ENCODE measurements at regions of chr10 and their contacts with region 1.

Region 1: DNA sequence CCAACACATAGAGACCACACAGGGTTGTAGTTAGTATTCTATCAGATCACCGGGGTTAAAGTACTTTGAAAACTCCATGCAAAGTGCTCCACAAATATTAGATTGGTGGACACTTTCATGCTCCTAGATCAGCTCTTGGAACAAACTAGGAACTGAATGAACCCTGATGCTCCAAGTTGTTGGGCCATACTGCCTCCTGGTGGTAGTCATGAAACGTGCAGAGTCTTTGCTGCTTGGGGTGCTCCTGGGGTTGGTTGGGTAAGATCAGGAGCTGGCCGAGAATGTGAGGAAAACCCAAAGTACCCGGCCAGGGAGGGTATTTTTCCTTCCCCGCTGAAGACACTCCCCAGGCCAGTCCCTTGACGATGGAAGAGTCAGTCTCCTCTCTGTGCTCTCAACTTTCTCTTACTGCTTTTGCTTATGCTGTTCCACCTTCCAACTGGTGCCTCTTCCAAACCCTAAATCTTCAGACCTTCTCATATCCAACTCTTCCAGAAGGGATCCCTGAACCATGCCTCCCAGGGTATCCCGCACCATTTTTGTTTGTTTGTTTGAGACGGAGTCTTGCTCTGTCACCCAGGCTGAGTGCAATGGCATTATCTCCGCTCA is 920 bp upstream of the RPEL1 start:
- DNase-seq: peak; percentile 88
- H3K4me3 Mint-ChIP-seq: no peak overlapping the region
- H3K27ac Mint-ChIP-seq: no peak overlapping the region
- H3K4me1 Mint-ChIP-seq: peaks cover 22% of the 10 kb centered on the region
- H3K27me3 Mint-ChIP-seq: no peaks in the 10 kb centered on the region
- CTCF ChIP-seq: peak; percentile 72

Region 2: GRCh38 chr10:102917962-102918816 is 326.6 kb before region 1 on chr10 and contains the start of gene CNNM2:
- CTCF ChIA-PET with region 1: interaction called, 6 read pairs
- POLR2A ChIA-PET with region 1: interaction called, 8 read pairs
- intact Hi-C with region 1: loop called (anchors 1 kb)
- DNase-seq: peak; percentile 100
- H3K4me3 Mint-ChIP-seq: peak within 1 kb of the TSS; percentile 89
- H3K27ac Mint-ChIP-seq: peak within 1 kb of the TSS; percentile 49
- H3K4me1 Mint-ChIP-seq: peaks cover 24% of the 10 kb centered on the region
- H3K27me3 Mint-ChIP-seq: no peaks in the 10 kb centered on the region
- CTCF ChIP-seq: no peak
- total RNA-seq, gene CNNM2: 5.6 and 7.4 TPM in 2 replicates

Region 3: DNA sequence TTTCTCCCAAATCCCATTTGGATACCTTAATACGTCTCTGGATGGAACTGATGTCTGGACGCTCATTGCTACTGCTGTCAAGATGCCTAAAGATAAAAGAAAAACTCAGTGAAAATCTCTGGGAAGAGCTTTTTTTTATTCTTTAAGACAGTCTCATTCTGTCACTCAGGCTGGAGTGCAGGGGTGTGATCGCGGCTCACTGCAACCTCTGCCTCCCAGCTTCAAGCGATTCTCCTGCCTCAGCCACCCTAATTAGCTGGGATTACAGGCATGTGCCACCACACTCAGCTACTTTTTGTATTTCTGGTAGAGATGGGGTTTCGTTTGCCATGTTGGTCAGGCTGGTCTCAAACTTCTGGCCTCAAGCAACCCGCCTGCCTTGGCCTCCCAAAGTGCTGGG is 153.9 kb before region 1 on chr10:
- CTCF ChIA-PET with region 1: interaction called, 4 read pairs
- POLR2A ChIA-PET with region 1: no interaction called
- intact Hi-C with region 1: loop called (anchors 5 kb)
- DNase-seq: no peak
- H3K4me3 Mint-ChIP-seq: no peak overlapping the region
- H3K27ac Mint-ChIP-seq: no peak overlapping the region
- H3K4me1 Mint-ChIP-seq: no peaks in the 10 kb centered on the region
- H3K27me3 Mint-ChIP-seq: no peaks in the 10 kb centered on the region
- CTCF ChIP-seq: no peak

Region 4: GRCh38 chr10:103120977-103121735 is 123.6 kb before region 1 on chr10:
- CTCF ChIA-PET with region 1: interaction called, 3 read pairs
- POLR2A ChIA-PET with region 1: interaction called, 3 read pairs
- intact Hi-C with region 1: loop called (anchors 5 kb)
- DNase-seq: peak; percentile 44
- H3K4me3 Mint-ChIP-seq: no peak overlapping the region
- H3K27ac Mint-ChIP-seq: no peak overlapping the region
- H3K4me1 Mint-ChIP-seq: no peaks in the 10 kb centered on the region
- H3K27me3 Mint-ChIP-seq: no peaks in the 10 kb centered on the region
- CTCF ChIP-seq: no peak

Region 5: DNA sequence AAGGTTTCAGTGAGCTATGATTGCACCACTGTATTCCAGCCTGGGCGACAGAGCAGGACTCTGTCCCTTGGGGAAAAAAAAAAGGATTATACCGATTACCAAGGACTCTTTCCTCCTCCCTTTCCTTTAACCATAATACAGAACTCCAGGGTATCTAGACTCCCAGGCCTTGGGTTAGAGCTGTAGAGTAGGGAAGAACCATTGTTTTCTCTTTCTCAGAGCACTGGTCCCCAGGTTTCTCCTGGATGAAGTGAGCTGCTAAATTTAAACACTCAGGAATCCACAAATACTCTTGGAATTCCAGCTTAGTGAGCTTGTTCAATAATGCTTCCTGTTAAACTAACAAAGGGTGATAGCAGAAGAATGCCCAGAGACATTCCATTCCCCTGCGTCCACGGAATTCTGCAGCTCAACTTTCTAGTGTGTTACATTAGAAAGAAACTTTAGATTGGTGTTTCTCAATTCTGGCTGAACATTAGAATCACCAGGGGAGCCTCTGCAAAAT is 13.7 kb before region 1 on chr10:
- CTCF ChIA-PET with region 1: interaction called, 20 read pairs
- POLR2A ChIA-PET with region 1: interaction called, 12 read pairs
- intact Hi-C with region 1: no loop called
- DNase-seq: peak; percentile 79
- H3K4me3 Mint-ChIP-seq: no peak overlapping the region
- H3K27ac Mint-ChIP-seq: no peak overlapping the region
- H3K4me1 Mint-ChIP-seq: peaks cover 17% of the 10 kb centered on the region
- H3K27me3 Mint-ChIP-seq: no peaks in the 10 kb centered on the region
- CTCF ChIP-seq: no peak

Region 6: GRCh38 chr10:103458720-103459119 is 214.0 kb after region 1 on chr10 and contains the start of gene CALHM1:
- CTCF ChIA-PET with region 1: no interaction called
- POLR2A ChIA-PET with region 1: no interaction called
- intact Hi-C with region 1: no loop called
- DNase-seq: no peak
- H3K4me3 Mint-ChIP-seq: no peak within 1 kb of the TSS
- H3K27ac Mint-ChIP-seq: no peak within 1 kb of the TSS
- H3K4me1 Mint-ChIP-seq: no peaks in the 10 kb centered on the region
- H3K27me3 Mint-ChIP-seq: peaks cover 6% of the 10 kb centered on the region
- CTCF ChIP-seq: no peak
- total RNA-seq, gene CALHM1: not detected in 2 replicates